Transverse colon (tissue), 4 donors: ENCODE measurements at regions of chr7 and their contacts with region 1.

Region 1: DNA sequence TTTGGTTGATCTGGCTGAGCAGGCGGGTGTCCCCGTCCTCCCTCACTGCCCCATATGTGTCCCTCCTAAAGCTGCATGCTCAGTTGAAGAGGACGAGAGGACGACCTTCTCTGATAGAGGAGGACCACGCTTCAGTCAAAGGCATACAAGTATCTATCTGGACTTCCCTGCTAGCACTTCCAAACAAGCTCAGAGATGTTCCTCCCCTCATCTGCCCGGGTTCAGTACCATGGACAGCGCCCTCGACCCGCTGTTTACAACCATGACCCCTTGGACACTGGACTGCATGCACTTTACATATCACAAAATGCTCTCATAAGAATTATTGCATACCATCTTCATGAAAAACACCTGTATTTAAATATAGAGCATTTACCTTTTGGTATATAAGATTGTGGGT is 26.9 kb upstream of the TRIM56 start:
- DNase-seq: peak; percentile 58
- H3K4me3 ChIP-seq: no peak overlapping the region
- H3K27ac ChIP-seq: no peak overlapping the region
- H3K4me1 ChIP-seq: peaks cover 0 to 4% (median 0%) of the 10 kb centered on the region in 4 donors
- H3K27me3 ChIP-seq: peaks cover 29% of the 10 kb centered on the region
- CTCF ChIP-seq: no peak
- EP300 ChIP-seq: no peak
- POLR2A ChIP-seq: no peak

Region 2: GRCh38 chr7:100803398-100804233 is 254.7 kb before region 1 on chr7:
- in situ Hi-C with region 1: loop called in 1 of 4 experiments (anchors 25 kb)
- intact Hi-C with region 1: no loop called
- DNase-seq: peak; percentile 82
- H3K4me3 ChIP-seq: peak overlapping the region in 1 of 4 donors; percentile 31
- H3K27ac ChIP-seq: peak overlapping the region; percentile 70 to 79 (median 72)
- H3K4me1 ChIP-seq: peaks cover 23 to 43% (median 26%) of the 10 kb centered on the region in 4 donors
- H3K27me3 ChIP-seq: no peaks in the 10 kb centered on the region
- CTCF ChIP-seq: no peak
- EP300 ChIP-seq: no peak
- POLR2A ChIP-seq: no peak

Region 3: DNA sequence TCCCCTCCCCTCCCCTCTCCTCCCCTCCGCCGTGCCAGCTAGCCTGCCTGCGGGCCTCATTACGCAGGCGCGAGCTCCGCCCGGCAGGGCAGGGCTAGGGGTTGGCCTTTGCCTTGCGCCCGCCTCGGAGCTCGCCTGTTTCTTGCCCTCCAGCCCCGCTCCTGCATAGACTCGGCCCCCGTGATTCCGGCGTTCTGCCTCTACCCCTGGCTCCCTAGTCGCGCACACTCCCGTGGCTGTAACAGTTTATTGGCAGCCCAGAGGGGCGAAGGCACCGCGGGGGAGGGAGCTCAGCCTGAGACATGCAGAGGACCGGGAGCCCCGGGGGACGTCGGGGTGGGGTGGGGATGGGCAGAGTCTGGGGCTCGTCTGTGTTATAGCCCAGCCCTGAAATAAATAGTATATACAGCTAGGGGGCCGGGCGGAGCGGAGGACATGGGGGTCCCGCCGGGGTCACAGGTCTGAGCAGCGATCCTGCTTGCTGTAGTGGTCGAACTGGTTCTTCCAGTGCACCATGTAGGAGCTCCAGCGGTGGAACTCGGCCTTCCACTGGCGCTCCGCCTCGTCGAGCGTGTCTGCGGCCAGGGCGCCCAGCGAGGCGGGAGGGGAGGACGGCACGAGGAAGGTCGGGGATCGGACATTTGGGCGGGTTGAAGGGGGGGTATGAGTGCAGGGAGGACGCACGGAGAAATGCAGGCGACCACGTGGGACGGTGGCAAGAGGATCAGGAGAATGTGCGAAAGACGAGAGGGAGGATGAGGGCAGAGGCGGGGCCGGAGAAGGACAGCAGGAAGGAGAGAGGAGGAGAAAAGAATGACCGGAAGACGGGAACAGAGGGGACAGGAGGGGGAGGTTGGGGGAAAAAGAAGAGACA is 168.4 kb before region 1 on chr7:
- in situ Hi-C with region 1: loop called in 2 of 4 experiments (anchors 5 kb)
- intact Hi-C with region 1: no loop called
- DNase-seq: peak; percentile 95
- H3K4me3 ChIP-seq: peak overlapping the region; percentile 51 to 90 (median 60)
- H3K27ac ChIP-seq: peak overlapping the region; percentile 94 to 100 (median 96)
- H3K4me1 ChIP-seq: peaks cover 32 to 55% (median 36%) of the 10 kb centered on the region in 4 donors
- H3K27me3 ChIP-seq: peaks cover 13% of the 10 kb centered on the region
- CTCF ChIP-seq: peak in 1 of 5 experiments; percentile 46
- EP300 ChIP-seq: no peak
- POLR2A ChIP-seq: peak; percentile 80

Region 4: DNA sequence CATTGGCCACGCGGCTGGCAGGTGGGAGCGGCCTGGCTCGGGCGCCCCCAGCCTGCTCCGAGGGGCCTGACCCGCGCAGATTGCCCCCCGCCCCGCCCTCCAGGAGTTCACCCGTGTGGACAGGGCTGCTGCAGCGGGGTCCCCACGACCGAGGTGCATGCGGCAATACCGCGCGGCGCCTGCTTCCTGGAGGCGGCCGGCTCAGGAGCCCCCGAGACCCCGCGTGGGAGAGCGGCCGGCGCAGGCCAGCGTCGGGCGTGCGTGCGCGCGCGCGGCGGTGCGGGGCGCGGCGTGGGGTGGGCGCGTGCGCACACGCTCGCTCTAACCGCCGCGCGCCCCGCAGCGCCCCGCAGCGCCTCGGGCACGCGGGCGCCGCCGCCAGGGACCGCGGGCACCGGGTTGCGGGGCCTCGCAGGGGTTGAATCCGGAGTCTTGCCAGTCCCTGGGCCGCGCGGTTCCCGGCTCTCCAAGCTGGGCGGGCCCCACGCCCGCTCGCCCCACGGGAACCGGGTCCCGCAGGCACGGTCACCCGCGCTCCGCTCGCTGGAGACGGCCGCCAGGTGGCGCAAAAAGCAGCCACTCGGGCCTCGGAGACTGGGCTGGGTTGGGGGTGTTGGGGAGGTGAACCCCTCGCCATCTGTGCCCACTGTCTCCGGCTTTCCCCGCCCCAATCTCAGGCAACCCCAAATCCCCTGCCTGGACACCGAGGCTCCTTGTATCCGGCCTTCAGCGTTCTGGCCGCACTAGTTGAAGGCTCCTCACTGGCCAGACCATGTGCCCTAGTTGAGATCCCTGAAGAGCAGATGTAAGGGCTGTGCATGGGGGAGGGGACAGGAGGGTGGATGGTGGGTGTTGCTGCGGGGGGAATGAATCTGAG is 161.4 kb before region 1 on chr7:
- in situ Hi-C with region 1: loop called (anchors 5 to 10 kb)
- intact Hi-C with region 1: loop called (anchors 1 kb)
- DNase-seq: peak; percentile 76
- H3K4me3 ChIP-seq: peak overlapping the region in 2 of 4 donors; percentile 30 to 63
- H3K27ac ChIP-seq: peak overlapping the region; percentile 53 to 78 (median 68)
- H3K4me1 ChIP-seq: peaks cover 20 to 42% (median 30%) of the 10 kb centered on the region in 4 donors
- H3K27me3 ChIP-seq: peaks cover 54% of the 10 kb centered on the region
- CTCF ChIP-seq: peak; percentile 76 to 93 (median 85)
- EP300 ChIP-seq: no peak
- POLR2A ChIP-seq: no peak